ENCODE measurements at regions of chr3 and their contacts with region 1.

Region 1: GRCh38 chr3:71389911-71390573 is 193.5 kb downstream of the FOXP1 start:
- DNase-seq: no peak
- ATAC-seq: no peak
- H3K4me3 ChIP-seq: no peak overlapping the region
- H3K27ac ChIP-seq: no peak overlapping the region
- H3K4me1 ChIP-seq: peaks cover 27% of the 10 kb centered on the region
- H3K27me3 ChIP-seq: no peaks in the 10 kb centered on the region
- CTCF ChIP-seq: no peak
- EP300 ChIP-seq: no peak
- POLR2A ChIP-seq: no peak
- RAD21 ChIP-seq: no peak

Region 2: GRCh38 chr3:70882104-70882503 is 507.9 kb before region 1 on chr3:
- CTCF ChIA-PET with region 1: no interaction called
- POLR2A ChIA-PET with region 1: no interaction called
- RAD21 ChIA-PET with region 1: no interaction called
- SMC1A ChIA-PET with region 1: no interaction called
- in situ Hi-C with region 1: no loop called
- intact Hi-C with region 1: no loop called
- DNase-seq: no peak
- ATAC-seq: no peak
- H3K4me3 ChIP-seq: no peak overlapping the region
- H3K27ac ChIP-seq: no peak overlapping the region
- H3K4me1 ChIP-seq: no peaks in the 10 kb centered on the region
- H3K27me3 ChIP-seq: no peaks in the 10 kb centered on the region
- CTCF ChIP-seq: no peak
- EP300 ChIP-seq: no peak
- POLR2A ChIP-seq: no peak
- RAD21 ChIP-seq: no peak

Region 3: DNA sequence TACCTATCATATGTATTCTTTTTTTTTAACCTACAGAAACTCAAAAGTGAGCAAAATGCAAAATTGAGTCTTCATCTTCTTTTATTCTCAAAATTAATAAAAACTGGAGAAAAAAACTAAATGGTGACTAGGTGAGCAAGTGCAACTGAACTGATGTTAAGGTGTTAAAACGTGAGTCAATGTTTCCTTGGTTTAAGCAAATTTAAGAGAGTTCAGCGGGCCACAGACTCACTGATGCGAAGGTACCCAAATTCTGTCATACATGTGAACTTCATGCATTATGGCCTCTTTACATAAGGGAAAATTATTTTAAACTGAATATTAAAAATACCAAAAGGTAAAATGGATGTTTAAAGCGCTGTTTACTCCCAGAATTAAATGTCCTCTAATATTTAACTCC is 13.1 kb before region 1 on chr3:
- CTCF ChIA-PET with region 1: interaction called, 6 read pairs
- POLR2A ChIA-PET with region 1: interaction called, 3 read pairs
- RAD21 ChIA-PET with region 1: interaction called, 3 read pairs
- SMC1A ChIA-PET with region 1: interaction called, 10 read pairs
- in situ Hi-C with region 1: no loop called
- intact Hi-C with region 1: no loop called
- DNase-seq: no peak
- ATAC-seq: peak; percentile 75
- H3K4me3 ChIP-seq: no peak overlapping the region
- H3K27ac ChIP-seq: no peak overlapping the region
- H3K4me1 ChIP-seq: no peaks in the 10 kb centered on the region
- H3K27me3 ChIP-seq: no peaks in the 10 kb centered on the region; a peak in 2 of 4 replicates
- CTCF ChIP-seq: no peak
- EP300 ChIP-seq: no peak
- POLR2A ChIP-seq: no peak
- RAD21 ChIP-seq: no peak